Posterior vena cava (tissue), 2 donors: ENCODE measurements at regions of chr3 and their contacts with region 1.

Region 1: DNA sequence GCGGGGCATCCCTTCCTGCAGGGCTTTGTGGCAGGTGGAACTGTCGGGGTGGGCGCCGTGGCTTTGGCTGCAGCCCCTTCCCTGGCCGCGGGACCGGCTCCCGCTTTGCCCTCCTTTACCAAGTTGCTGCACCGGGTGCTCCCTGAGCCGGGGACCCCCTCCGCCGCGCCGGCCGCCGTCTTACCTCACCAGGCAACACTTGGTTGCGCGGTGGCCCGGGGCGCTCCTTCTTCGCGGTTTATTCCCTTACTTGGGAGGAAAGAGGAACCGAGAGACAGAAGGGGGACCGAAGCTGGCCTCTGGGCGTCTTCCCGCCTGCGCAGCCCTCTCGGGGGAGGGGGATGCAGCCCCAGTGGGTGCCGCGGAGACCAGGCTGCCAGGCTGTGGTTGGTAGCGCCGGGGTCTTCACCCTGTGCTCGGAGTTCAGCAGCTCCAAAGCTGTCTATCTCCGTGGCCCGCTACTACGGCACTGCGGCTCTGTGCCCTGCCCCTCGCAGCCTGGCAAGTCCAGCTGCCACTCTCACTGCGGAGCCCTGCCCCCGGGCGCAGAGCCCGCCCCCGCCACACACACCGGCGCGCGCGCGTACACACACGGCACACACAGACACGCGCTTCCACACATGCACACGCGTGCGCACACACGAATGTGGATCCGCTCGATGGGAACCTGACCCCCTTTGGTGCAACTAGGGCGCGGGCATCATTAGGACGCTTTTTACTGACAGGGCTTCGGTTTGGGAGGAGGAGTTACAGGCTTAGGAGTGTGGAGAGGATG is at the start of gene DGKG:
- DNase-seq: peak; percentile 89
- total RNA-seq, gene DGKG: 16.7 to 18.2 TPM

Region 2: DNA sequence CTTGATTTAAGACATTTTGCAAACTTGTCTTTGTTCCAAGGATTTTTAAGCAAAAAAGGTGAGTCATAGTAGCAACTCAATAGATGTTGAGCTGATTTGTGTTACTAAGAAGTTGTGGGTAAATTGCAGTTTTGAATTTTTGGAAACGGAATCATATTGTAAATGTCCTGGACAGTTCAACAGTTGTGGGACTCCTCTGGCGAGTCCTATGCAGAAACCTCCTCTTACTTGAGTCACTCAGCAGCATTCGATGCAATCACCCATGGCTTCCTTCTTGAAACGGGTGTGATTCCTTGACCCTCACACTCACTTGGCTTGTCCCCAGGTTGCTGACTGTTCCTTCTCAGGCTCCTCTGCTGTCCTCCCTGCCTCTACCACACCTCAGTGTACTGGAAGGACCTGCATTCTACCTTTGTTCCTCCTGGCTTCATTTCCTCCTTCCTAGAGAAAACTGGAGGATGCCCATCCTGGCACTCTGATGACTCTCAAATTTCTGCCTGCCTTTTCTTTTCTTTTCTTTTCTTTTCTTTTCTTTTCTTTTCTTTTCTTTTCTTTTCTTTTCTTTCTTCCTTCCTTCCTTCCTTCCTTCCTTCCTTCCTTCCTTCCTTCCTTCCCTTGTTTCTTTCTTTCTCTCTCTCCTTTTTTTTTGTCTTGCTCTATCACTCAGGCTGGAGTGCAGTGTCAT is 52.9 kb after region 1 on chr3:
- intact Hi-C with region 1: loop called in 1 of 2 experiments (anchors 5 kb)
- DNase-seq: no peak